ENCODE measurements at regions of chr1 and their contacts with region 1.

Region 1: DNA sequence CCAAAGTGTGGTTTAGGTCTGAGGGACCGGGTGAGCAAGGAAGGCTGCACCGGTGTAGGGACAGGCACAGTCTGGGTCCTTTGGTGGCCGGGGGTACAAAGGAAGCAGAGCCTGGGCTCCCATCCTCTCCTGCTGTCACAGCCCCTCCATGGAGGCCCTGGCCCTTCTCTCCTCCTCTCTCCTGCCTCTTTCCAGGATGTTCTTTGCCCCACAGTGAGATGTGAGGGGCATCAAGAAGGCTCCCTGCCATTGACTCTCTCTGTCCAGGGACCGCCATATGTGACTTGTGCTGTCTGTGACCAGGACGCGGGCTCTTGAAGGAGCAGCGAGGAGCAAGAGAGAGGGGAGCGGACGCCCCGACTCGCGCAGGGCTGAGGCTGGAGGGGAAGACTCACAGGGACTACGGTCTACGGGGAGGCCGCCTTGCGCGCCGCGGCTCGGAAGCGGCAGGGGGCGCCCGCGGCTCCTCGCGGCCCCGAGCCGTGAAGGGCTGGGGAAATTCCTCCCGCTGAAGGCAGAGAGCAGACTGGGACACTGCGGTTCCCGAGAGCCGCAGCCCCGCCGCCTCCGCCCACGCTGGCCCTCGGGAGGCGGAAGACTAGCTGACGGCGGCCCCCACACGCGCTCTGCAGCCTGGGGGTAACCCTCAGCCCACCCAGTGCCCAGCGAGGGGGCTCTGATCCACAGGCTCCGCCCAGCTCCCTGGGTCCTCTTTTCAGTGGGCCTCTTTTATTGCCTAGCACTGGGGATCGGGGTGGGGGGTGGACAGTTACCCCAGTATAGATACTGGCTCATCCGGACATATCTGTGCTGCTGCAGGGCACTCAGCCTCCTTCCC is 40.8 kb downstream of the MAB21L3 start:
- DNase-seq: peak; percentile 70 to 75
- ATAC-seq: peak; percentile 90 to 97 (median 96)
- H3K4me3 ChIP-seq: peak overlapping the region in 9 of 10 donors; percentile 42 to 60 (median 52)
- H3K27ac ChIP-seq: peak overlapping the region; percentile 43 to 85 (median 75)
- H3K4me1 ChIP-seq: peaks cover 5 to 30% (median 11%) of the 10 kb centered on the region in 9 donors
- H3K27me3 ChIP-seq: no peaks in the 10 kb centered on the region
- CTCF ChIP-seq: peak; percentile 87 to 99 (median 93)

Region 2: DNA sequence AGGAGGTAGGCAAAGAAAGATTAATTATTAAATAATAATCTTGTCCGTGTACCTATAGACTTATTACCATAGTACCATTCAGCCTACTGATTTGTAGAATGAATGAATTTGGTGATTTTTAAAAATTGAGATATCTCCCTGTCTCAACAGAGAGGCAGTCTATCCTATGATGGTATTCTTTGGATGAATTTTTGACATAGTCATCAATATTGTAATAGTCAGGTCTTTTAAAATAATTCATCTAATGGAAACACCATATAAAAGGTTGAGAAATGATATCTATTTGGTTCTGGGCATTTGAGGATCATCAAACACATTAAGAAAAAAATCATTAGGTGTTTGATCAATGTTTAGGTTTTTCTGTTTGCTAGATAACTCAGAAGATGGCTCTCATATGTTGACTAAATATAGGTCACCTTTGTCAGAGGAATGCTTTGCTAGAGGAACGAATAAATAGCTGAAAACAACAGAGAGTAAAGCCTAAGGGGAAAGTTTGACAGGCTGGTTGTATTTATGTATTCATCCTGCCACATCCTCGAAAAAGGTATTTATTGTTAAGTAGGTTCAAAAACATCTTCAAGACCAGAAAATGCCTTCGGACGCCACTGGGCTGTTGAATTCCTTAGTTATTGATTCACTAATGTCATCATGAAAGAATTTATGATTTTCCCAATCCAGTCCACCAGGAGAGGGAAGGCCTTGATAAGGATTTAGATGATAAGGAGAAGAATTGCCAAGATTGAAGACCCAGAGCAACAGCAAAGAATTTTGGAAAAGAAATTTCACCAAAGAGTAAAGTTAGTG is 76.2 kb before region 1 on chr1:
- intact Hi-C with region 1: no loop called
- DNase-seq: no peak
- ATAC-seq: no peak
- H3K4me3 ChIP-seq: no peak overlapping the region
- H3K27ac ChIP-seq: no peak overlapping the region
- H3K4me1 ChIP-seq: no peaks in the 10 kb centered on the region
- H3K27me3 ChIP-seq: no peaks in the 10 kb centered on the region
- CTCF ChIP-seq: no peak

Region 3: DNA sequence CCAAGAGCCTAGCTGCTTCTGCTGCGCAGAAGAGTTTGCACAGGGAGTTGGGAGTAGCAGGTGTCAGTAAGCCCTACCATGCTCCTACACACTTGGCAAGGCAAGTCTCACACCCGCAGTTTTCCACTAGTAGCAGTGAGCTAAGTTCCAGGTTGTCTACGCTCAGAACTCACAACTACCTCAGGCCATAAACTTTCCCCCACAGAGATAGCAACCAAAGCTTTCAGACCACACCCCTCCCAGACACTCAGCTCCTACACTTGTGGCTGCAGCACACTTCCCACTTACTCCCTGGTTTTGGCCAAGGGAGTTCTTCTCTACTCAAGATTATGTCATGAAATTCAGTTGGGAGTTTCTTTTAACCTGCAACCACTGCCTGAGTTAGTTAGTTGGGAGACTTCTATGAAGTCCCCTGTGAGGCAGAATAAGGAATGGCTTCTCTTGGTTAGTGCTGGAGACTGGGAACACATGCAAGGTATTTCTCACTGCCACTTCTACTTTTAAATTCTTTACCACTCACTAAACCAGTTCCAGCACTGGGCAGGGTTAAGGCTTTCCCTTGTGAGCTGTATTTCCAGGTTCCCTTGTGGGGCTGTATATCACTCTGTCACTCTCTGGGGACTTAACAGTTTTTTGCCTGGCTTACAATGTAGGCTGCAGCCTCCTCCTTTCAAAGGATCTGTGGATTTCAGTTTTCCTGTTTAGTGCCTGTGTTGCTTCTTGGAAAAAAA is 59.0 kb before region 1 on chr1:
- intact Hi-C with region 1: no loop called
- DNase-seq: no peak
- ATAC-seq: no peak
- H3K4me3 ChIP-seq: no peak overlapping the region
- H3K27ac ChIP-seq: no peak overlapping the region
- H3K4me1 ChIP-seq: peaks cover 0 to 3% (median 0%) of the 10 kb centered on the region in 9 donors
- H3K27me3 ChIP-seq: no peaks in the 10 kb centered on the region
- CTCF ChIP-seq: no peak

Region 4: DNA sequence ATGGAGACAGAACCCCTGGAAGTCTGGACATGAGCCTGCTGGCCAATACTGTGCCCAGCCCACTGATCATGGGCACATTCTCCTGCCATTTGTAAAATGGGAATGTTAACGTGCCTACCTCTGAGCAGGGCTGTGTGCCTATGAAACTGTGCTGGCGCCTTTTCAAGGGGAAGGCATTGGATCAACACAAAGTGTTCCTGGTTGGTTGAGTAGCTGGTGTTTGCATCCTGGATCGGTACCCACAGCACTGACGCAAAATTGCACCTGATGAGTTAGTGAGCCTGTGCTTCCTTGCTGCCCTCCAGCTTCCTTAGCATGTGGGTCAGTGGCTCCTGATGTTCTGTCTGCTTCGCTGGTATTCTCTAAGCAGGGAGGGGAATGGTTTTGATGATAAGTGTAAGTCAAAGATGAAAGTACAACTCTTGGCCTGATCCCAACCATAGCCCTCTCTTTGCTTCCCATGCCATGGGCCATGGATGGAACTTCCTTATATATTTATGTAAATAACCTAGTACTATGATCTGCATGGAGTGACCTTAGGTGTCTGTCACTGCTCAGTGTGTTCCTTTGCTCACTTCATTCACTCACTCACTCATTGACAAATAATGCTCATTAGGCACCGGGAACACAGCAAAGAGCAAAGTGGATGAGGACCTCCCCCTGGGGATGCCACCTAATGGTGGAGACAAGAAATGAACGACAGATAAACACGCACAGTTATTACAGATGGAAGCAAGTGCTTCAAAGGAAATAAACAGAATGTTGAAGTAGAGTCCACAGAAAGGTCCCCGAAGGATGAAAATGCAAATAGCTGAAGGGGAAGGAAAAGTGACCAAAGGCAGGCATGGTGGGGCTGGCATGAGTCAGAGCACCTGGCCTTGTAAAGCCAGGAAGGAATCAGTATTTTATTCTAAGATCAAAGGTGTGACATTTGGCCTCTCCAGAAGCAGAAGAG is 18.0 kb before region 1 on chr1:
- intact Hi-C with region 1: no loop called
- DNase-seq: no peak
- ATAC-seq: peak in 2 of 8 donors; percentile 16 to 64
- H3K4me3 ChIP-seq: no peak overlapping the region
- H3K27ac ChIP-seq: no peak overlapping the region
- H3K4me1 ChIP-seq: peaks cover 0 to 4% (median 0%) of the 10 kb centered on the region in 9 donors
- H3K27me3 ChIP-seq: peaks cover 0 to 3% (median 0%) of the 10 kb centered on the region in 7 donors
- CTCF ChIP-seq: peak in 4 of 9 donors; percentile 14 to 22 (median 16)

Region 5: GRCh38 chr1:116352349-116352813 is 200.4 kb after region 1 on chr1:
- intact Hi-C with region 1: loop called in 1 of 10 experiments (anchors 10 kb)
- DNase-seq: no peak
- ATAC-seq: no peak
- H3K4me3 ChIP-seq: no peak overlapping the region
- H3K27ac ChIP-seq: no peak overlapping the region
- H3K4me1 ChIP-seq: peaks cover 0 to 10% (median 0%) of the 10 kb centered on the region in 9 donors
- H3K27me3 ChIP-seq: no peaks in the 10 kb centered on the region
- CTCF ChIP-seq: no peak

Region 6: GRCh38 chr1:116360429-116361173 is 208.6 kb after region 1 on chr1:
- intact Hi-C with region 1: loop called in 2 of 10 experiments (anchors 10 kb)
- DNase-seq: no peak
- ATAC-seq: no peak
- H3K4me3 ChIP-seq: no peak overlapping the region
- H3K27ac ChIP-seq: no peak overlapping the region
- H3K4me1 ChIP-seq: peaks cover under 1 to 15% (median 7%) of the 10 kb centered on the region in 9 donors
- H3K27me3 ChIP-seq: no peaks in the 10 kb centered on the region
- CTCF ChIP-seq: peak; percentile 8 to 62 (median 45)

Region 7: DNA sequence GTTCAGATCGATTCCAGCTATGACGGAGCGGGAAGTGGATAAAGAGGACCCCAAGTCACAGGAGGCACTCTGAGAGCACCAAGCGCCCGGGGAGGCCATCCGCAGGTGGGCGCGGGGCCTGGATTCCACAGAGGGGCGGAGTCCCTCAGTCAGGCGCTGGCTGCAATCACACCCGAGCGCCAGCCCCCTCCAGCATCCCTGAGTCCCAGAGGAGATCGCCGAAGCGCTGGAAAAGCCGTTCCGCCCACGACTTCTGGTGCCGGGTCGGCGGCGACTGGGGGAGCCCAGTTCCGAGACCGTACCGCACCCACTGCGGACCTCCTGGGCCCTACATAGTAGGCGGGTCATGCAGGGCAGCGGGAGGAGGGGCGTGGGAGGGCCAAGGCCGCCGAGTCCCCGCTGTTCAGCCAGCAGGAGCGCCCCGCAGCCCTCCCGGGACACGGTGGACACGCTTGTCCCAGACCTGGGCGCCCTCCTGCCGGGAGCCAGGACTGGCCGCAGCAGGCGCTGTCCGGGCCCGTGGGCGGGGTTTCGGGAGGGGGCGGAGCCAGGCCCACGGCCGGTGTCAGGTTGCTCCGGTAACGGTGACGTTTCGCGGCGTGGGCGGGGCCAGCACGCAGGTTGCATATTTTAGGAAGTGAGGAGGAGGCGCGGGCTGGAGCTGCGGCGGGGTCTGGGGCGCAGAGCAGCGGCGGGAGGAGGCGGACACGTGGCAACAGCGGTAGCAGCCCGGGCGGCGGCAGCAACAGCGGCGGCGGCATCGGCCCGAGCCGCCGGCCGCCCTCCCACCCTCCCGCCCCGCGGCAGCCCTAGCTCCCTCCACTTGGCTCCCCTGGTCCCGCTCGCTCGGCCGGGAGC is 220.9 kb after region 1 on chr1 and contains the start of gene ATP1A1:
- intact Hi-C with region 1: loop called in 4 of 10 experiments (anchors 5 to 10 kb)
- DNase-seq: peak; percentile 97 to 99
- ATAC-seq: peak; percentile 84 to 92 (median 88)
- H3K4me3 ChIP-seq: peak within 1 kb of the TSS; percentile 66 to 90 (median 86)
- H3K27ac ChIP-seq: peak within 1 kb of the TSS; percentile 91 to 98 (median 97)
- H3K4me1 ChIP-seq: peaks cover 10 to 49% (median 43%) of the 10 kb centered on the region in 9 donors
- H3K27me3 ChIP-seq: no peaks in the 10 kb centered on the region
- CTCF ChIP-seq: peak in 5 of 9 donors; percentile 2 to 50 (median 39)
- total RNA-seq, gene ATP1A1: 153 to 403 (median 203) TPM

Region 8: DNA sequence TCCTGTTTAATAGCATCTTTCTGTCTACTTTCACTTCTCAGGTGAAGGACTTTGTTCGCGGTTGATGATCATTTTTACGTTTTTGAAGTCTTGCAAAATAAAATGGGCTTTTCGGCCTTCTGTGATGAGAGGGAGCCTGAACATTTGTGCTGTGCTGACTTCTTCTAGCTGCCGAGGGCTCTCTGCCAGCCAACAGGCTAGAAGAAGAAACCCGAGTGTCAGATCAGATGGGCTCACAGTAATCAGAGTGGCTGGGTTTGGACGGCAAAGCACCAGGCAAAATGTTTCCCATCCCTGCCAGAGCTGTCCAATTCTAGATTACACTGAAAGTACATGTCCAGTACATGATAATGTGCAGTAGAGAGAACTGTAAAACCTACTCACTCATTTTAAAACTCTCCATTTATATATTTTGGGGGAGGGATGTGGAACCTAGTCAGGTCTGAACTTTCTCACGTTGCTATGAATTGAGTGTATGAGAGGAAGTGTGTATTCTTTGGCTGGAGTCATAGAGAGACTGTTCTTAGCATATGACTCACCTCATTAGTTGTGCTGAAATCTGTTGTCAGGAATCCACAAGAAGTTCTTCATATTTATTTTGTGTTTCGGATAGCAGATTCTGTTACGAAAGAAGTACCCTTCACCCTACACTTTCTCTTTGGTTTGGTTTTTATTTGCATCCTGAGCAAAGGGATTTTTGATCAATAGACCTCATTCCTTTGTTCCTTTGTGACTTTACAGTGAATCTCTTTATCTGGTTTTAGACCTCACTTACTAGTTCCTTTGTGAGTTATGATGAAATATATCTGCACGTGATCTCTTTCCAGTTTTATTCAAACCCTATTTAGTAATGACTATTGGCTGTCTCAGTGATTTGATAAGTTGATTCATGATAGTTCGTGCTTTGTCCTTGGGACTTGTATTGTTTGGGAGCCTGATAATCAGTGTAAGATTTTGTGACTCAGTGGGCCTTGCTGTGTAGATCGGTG is 225.9 kb after region 1 on chr1:
- intact Hi-C with region 1: loop called in 4 of 10 experiments (anchors 5 to 10 kb)
- DNase-seq: peak; percentile 57 to 62
- ATAC-seq: peak in 7 of 8 donors; percentile 18 to 51 (median 47)
- H3K4me3 ChIP-seq: peak overlapping the region in 7 of 10 donors; percentile 3 to 88 (median 29)
- H3K27ac ChIP-seq: peak overlapping the region; percentile 91 to 98 (median 97)
- H3K4me1 ChIP-seq: peaks cover 28 to 92% (median 86%) of the 10 kb centered on the region in 9 donors
- H3K27me3 ChIP-seq: no peaks in the 10 kb centered on the region
- CTCF ChIP-seq: no peak

Measured in heart right ventricle (tissue), 16 donors.